Naive thymus-derived CD4-positive, alpha-beta T cell (primary cell): ENCODE measurements at regions of chrX and their contacts with region 1.

Region 1: GRCh38 chrX:153971450-153972367 is at the start of gene HCFC1:
- DNase-seq: peak; percentile 82 to 98 (median 93)
- ATAC-seq: peak; percentile 65
- H3K4me3 ChIP-seq: peak within 1 kb of the TSS; percentile 97
- H3K4me3 Mint-ChIP-seq: peak within 1 kb of the TSS; percentile 91 to 100 (median 100)
- H3K27ac ChIP-seq: peak within 1 kb of the TSS; percentile 99
- H3K27ac Mint-ChIP-seq: peak within 1 kb of the TSS; percentile 93 to 100 (median 100)
- H3K4me1 ChIP-seq: peaks cover 28 to 29% of the 10 kb centered on the region in 2 donors
- H3K4me1 Mint-ChIP-seq: peaks cover 21 to 52% (median 34%) of the 10 kb centered on the region in 7 donors
- H3K27me3 ChIP-seq: no peaks in the 10 kb centered on the region
- H3K27me3 Mint-ChIP-seq: no peaks in the 10 kb centered on the region
- total RNA-seq, gene HCFC1: 52.3 to 106 (median 67.2) TPM

Region 2: GRCh38 chrX:153470435-153471363 is 501.0 kb before region 1 on chrX and contains the start of gene HAUS7:
- CTCF ChIA-PET with region 1: no interaction called
- POLR2A ChIA-PET with region 1: no interaction called
- intact Hi-C with region 1: loop called in 1 of 2 experiments (anchors 2 kb)
- DNase-seq: peak; percentile 73 to 88 (median 85)
- ATAC-seq: peak; percentile 92
- H3K4me3 ChIP-seq: peak within 1 kb of the TSS; percentile 74
- H3K4me3 Mint-ChIP-seq: peak within 1 kb of the TSS; percentile 64 to 88 (median 82)
- H3K27ac ChIP-seq: peak within 1 kb of the TSS; percentile 68
- H3K27ac Mint-ChIP-seq: peak within 1 kb of the TSS in 8 of 9 donors; percentile 62 to 85 (median 82)
- H3K4me1 ChIP-seq: peaks cover 3 to 17% of the 10 kb centered on the region in 2 donors
- H3K4me1 Mint-ChIP-seq: peaks cover 0 to 30% (median 12%) of the 10 kb centered on the region in 7 donors
- H3K27me3 ChIP-seq: no peaks in the 10 kb centered on the region
- H3K27me3 Mint-ChIP-seq: no peaks in the 10 kb centered on the region
- total RNA-seq, gene HAUS7: 23.2 to 44.8 (median 31.4) TPM

Region 3: DNA sequence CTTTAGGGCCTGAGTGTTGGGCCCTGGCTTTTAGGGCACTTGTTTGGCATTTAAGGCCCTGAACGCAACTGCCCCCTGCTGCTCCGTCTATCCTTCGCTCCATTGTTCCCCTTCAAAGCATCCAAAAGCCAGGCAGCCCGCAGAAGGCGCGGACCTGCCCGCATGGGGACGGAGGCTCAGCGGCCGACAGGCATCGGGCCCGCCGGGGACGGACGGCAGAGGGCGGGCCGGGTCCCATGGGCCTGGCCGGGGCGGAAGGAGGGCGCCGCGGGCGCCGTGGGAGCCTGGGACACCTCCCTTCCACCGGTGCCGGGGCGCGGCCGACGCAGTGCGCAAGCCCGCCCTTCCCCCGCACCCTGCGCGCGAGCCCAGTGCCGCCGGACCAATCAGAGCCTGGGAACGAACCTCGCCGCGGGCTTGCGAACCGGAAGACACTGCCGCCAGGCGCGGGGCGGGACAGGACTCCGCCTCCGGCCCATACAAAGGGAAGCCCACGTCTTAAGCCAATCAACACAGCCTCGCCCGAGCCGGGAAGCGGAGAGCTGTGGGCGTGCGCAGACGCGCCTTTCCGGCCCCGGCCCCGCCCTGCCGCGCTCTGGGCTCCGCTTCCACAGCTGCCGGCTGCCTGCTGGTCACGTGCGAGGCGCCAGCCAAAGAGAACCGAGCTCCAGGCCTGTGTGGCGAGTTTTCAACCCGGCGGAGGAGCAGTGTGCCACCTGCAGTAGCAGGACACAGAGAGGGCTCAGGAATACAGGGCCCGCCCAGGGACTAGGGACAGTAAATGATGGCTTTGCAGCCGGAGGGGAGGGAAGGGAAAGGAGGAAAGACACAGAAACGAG is 43.6 kb before region 1 on chrX:
- CTCF ChIA-PET with region 1: interaction called, 27 read pairs
- POLR2A ChIA-PET with region 1: interaction called, 127 read pairs
- intact Hi-C with region 1: loop called (anchors 1 kb)
- DNase-seq: peak; percentile 80 to 98 (median 94)
- ATAC-seq: peak; percentile 86
- H3K4me3 ChIP-seq: peak overlapping the region; percentile 81
- H3K4me3 Mint-ChIP-seq: peak overlapping the region; percentile 90 to 98 (median 94)
- H3K27ac ChIP-seq: peak overlapping the region; percentile 98
- H3K27ac Mint-ChIP-seq: peak overlapping the region; percentile 80 to 100 (median 98)
- H3K4me1 ChIP-seq: peaks cover 14 to 18% of the 10 kb centered on the region in 2 donors
- H3K4me1 Mint-ChIP-seq: peaks cover 0 to 68% (median 21%) of the 10 kb centered on the region in 7 donors
- H3K27me3 ChIP-seq: no peaks in the 10 kb centered on the region
- H3K27me3 Mint-ChIP-seq: no peaks in the 10 kb centered on the region

Region 4: DNA sequence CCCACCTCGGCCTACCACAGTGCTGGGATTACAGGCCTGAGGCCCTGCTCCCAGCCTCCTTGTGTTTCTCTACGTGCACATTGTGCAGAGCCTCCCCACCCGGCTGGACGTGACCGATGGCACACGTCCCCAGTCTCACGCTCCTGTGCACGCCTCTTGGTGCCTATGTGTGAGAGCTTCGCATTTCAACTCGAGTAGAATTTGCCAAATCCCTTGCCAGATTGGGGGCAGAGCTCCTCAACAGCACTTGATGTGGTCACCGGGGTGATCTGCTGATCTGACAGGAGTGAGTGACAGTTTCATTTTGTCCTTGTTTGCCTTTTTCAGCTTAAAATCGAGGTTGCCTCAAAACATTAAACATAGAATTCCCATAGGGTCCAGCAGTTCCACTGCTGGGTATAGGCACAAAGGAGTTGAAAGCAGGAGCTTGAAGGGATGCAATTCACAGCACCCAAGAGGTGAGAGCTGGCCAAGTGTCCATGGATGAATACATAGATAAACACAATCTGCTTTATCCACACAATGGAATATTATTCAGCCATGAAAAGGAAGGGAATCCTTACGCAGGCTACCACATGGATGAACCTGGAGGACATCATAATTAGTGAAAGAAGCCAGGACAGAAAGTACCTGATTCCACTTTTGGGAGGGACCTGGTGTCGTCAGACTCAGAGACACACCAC is 18.4 kb after region 1 on chrX:
- CTCF ChIA-PET with region 1: no interaction called
- POLR2A ChIA-PET with region 1: interaction called, 32 read pairs
- intact Hi-C with region 1: loop called in 1 of 2 experiments (anchors 1 kb)
- DNase-seq: peak in 3 of 9 donors; percentile 33 to 41 (median 35)
- ATAC-seq: peak; percentile 20
- H3K4me3 ChIP-seq: no peak overlapping the region
- H3K4me3 Mint-ChIP-seq: peak overlapping the region in 8 of 10 donors; percentile 39 to 75 (median 62)
- H3K27ac ChIP-seq: peak overlapping the region; percentile 42
- H3K27ac Mint-ChIP-seq: peak overlapping the region; percentile 55 to 91 (median 85)
- H3K4me1 ChIP-seq: peaks cover 2 to 14% of the 10 kb centered on the region in 2 donors
- H3K4me1 Mint-ChIP-seq: peaks cover 7 to 31% (median 16%) of the 10 kb centered on the region in 7 donors
- H3K27me3 ChIP-seq: no peaks in the 10 kb centered on the region
- H3K27me3 Mint-ChIP-seq: no peaks in the 10 kb centered on the region

Region 5: DNA sequence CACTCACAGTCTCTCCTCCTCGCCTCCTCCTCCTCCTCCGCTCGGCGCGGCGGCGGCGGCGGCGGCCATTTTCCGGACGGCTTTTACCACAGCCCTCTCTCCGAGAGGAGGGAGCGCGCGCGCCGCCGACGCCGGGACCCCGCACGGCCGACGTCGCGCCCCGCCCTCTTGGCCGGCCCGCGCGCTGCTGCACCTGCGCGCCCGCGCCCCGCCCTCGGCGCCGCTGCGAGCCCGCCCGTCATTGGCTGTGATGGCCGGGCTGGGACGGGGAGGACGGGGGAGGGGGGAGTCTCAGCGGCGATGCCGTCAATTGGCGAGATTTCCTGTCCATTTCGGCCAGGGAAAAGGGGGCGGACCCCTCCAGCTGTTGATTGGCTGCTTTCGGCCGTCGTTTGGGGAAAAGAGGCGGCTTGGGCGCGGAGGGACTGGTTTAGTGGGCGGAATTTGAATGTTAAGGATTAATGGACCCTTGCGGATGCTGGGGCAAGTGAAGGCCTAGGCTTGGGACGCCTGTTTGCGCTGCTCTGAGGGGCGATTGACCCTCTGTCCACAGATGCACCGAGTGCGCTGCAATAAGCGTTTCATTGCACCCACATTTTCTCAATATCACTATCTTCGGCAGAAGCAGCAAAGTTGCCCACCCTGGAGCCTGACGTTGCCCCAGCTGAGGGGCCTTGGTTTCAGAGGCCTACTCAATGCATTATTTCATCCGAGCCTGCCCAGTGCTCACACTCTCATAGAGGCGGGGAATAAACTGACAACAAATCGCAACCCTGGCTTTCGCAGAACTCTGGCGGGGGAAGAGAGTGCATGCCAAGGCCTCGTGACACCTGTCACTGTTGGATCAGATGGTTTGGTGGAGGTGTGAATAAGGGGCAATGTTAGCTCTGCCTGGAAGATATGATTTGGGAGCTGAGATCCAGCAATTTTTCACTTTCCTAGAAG is 126.2 kb after region 1 on chrX and contains the start of gene MECP2:
- CTCF ChIA-PET with region 1: no interaction called
- POLR2A ChIA-PET with region 1: interaction called, 3 read pairs
- intact Hi-C with region 1: loop called (anchors 1 to 5 kb)
- DNase-seq: peak; percentile 78 to 88 (median 86)
- ATAC-seq: peak; percentile 94
- H3K4me3 ChIP-seq: peak within 1 kb of the TSS; percentile 84
- H3K4me3 Mint-ChIP-seq: peak within 1 kb of the TSS; percentile 89 to 99 (median 96)
- H3K27ac ChIP-seq: peak within 1 kb of the TSS; percentile 84
- H3K27ac Mint-ChIP-seq: peak within 1 kb of the TSS; percentile 90 to 97 (median 94)
- H3K4me1 ChIP-seq: peaks cover 17 to 26% of the 10 kb centered on the region in 2 donors
- H3K4me1 Mint-ChIP-seq: peaks cover 14 to 51% (median 36%) of the 10 kb centered on the region in 7 donors
- H3K27me3 ChIP-seq: no peaks in the 10 kb centered on the region
- H3K27me3 Mint-ChIP-seq: peaks cover 0 to 4% (median 0%) of the 10 kb centered on the region in 5 donors
- total RNA-seq, gene MECP2: 72.7 to 155 (median 103) TPM

Region 6: DNA sequence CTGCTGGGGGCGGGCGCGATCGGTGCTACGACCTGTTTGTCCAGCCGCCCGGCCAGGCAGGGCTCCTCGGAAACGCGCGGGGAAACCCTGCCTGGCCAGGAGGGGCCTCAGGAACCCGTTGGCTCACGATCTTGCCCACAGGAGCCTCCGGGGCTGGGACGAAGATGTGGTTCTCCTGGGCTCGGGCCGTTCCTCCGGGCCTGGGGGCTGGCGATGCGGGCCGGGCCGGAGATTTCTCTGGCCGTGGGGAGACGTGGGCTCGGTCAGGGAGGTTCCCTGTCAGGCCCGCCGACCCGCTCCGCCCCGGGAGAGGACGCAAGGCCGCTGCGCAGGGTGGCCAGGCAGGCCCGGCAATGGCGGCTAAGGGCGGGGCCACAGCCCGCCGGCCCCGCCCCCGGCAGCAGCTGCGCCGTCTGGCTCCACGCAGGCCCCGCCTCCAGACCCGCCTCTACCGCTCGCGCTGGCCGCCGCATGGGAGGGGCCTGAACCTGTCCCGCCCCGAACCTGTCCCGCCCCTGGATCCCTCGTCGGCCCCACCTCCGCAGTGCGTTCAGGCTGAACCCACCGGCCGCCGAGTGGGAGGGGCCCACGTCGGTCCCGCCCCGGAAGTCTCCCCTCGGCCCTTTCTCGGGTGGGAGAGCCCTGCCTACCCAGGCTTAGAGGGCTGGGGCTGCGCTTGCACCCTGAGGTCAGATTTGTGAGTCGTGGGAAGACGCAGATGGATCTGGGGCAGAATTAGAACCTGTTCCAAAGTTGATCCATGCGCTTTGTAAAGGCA is 544.4 kb after region 1 on chrX and contains the start of gene FAM3A:
- CTCF ChIA-PET with region 1: no interaction called
- POLR2A ChIA-PET with region 1: interaction called, 3 read pairs
- intact Hi-C with region 1: loop called in 1 of 2 experiments (anchors 2 kb)
- DNase-seq: peak; percentile 85 to 91 (median 88)
- ATAC-seq: peak; percentile 99
- H3K4me3 ChIP-seq: peak within 1 kb of the TSS; percentile 62
- H3K4me3 Mint-ChIP-seq: peak within 1 kb of the TSS; percentile 79 to 93 (median 86)
- H3K27ac ChIP-seq: peak within 1 kb of the TSS; percentile 93
- H3K27ac Mint-ChIP-seq: peak within 1 kb of the TSS; percentile 56 to 95 (median 90)
- H3K4me1 ChIP-seq: peaks cover 6 to 12% of the 10 kb centered on the region in 2 donors
- H3K4me1 Mint-ChIP-seq: peaks cover 13 to 34% (median 27%) of the 10 kb centered on the region in 7 donors
- H3K27me3 ChIP-seq: no peaks in the 10 kb centered on the region
- H3K27me3 Mint-ChIP-seq: no peaks in the 10 kb centered on the region
- total RNA-seq, gene FAM3A: 37.6 to 63.7 (median 50.9) TPM